Dorsolateral prefrontal cortex (tissue), 120 donors: ENCODE measurements at regions of chr7 and their contacts with region 1.

Region 1: DNA sequence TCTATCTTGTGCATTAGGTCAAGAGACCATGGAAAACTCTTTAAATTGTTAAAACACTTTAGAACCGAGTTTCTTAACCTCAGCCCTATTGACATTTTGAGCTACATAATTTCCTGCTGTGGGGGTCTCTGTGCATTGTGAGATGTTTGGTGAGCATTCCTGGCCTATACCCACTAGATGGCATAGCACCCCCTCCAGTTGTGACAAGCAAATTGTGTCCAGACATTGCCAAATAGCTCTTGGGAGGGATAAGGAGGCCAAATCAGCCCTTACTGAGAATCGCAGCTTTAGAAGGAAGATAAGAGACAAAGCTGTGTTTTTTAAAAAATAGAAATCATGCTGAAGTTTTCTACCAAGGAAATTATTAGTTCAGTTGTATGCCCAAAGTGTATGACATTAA is 1158.5 kb upstream of the C7orf33 start:
- DNase-seq: peak in 3 of 10 donors; percentile 15 to 36 (median 35)
- H3K4me3 ChIP-seq: no peak overlapping the region
- H3K27ac ChIP-seq: no peak overlapping the region
- H3K27me3 ChIP-seq: no peaks in the 10 kb centered on the region
- CTCF ChIP-seq: peak in 52 of 56 donors; percentile 32 to 75 (median 58)

Region 2: GRCh38 chr7:147136352-147136751 is 295.7 kb before region 1 on chr7:
- intact Hi-C with region 1: no loop called
- DNase-seq: no peak
- H3K4me3 ChIP-seq: no peak overlapping the region
- H3K27ac ChIP-seq: no peak overlapping the region
- H3K27me3 ChIP-seq: no peaks in the 10 kb centered on the region
- CTCF ChIP-seq: no peak

Region 3: DNA sequence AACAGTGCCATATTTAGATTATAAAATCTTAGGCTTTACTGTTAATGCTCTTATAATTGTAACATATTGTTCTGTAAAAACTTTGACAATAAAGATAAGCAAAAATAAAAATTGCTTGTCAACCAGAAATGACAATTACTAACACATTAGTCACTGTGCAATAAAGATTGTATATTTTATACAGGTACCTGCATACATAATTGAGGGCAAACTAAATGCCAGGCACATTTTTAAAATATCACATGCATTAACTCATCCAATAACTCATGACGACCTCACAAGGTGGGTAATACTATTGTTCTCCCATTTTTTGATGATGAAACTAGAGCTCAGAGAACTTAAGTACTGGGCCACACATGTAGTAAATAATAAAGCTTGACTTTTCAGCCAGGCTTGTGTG is 138.3 kb after region 1 on chr7:
- intact Hi-C with region 1: no loop called
- DNase-seq: no peak
- H3K4me3 ChIP-seq: no peak overlapping the region
- H3K27ac ChIP-seq: peak overlapping the region in 8 of 59 donors; percentile 51 to 93 (median 85)
- H3K27me3 ChIP-seq: no peaks in the 10 kb centered on the region
- CTCF ChIP-seq: no peak

Region 4: GRCh38 chr7:147779949-147780348 is 347.9 kb after region 1 on chr7:
- intact Hi-C with region 1: loop called in 1 of 2 experiments (anchors 5 kb)
- DNase-seq: no peak
- H3K4me3 ChIP-seq: peak overlapping the region in 4 of 59 donors; percentile 3 to 23 (median 10)
- H3K27ac ChIP-seq: peak overlapping the region in 8 of 59 donors; percentile 1 to 48 (median 22)
- H3K27me3 ChIP-seq: no peaks in the 10 kb centered on the region
- CTCF ChIP-seq: no peak

Region 5: GRCh38 chr7:148084138-148084537 is 652.1 kb after region 1 on chr7:
- intact Hi-C with region 1: loop called (anchors 5 kb)
- DNase-seq: peak; percentile 23 to 83 (median 62)
- H3K4me3 ChIP-seq: peak overlapping the region in 4 of 59 donors; percentile 9 to 41 (median 22)
- H3K27ac ChIP-seq: peak overlapping the region in 7 of 59 donors; percentile 0 to 52 (median 23)
- H3K27me3 ChIP-seq: no peaks in the 10 kb centered on the region
- CTCF ChIP-seq: peak; percentile 53 to 91 (median 81)

Region 6: GRCh38 chr7:148142660-148143248 is 710.7 kb after region 1 on chr7:
- intact Hi-C with region 1: loop called in 1 of 2 experiments (anchors 10 kb)
- DNase-seq: no peak
- H3K4me3 ChIP-seq: no peak overlapping the region
- H3K27ac ChIP-seq: no peak overlapping the region
- H3K27me3 ChIP-seq: no peaks in the 10 kb centered on the region
- CTCF ChIP-seq: peak in 55 of 56 donors; percentile 50 to 83 (median 68)